Heart left ventricle (tissue), 16 donors: ENCODE measurements at regions of chr4 and their contacts with region 1.

Region 1: GRCh38 chr4:9904976-9905587 is 116.2 kb downstream of the SLC2A9 start:
- DNase-seq: peak in 1 of 5 donors; percentile 58
- ATAC-seq: peak; percentile 10 to 59 (median 36)
- H3K4me3 ChIP-seq: no peak overlapping the region
- H3K27ac ChIP-seq: no peak overlapping the region
- H3K4me1 ChIP-seq: peaks cover 0 to 11% (median 0%) of the 10 kb centered on the region in 12 donors
- H3K27me3 ChIP-seq: no peaks in the 10 kb centered on the region
- CTCF ChIP-seq: no peak
- POLR2A ChIP-seq: no peak

Region 2: DNA sequence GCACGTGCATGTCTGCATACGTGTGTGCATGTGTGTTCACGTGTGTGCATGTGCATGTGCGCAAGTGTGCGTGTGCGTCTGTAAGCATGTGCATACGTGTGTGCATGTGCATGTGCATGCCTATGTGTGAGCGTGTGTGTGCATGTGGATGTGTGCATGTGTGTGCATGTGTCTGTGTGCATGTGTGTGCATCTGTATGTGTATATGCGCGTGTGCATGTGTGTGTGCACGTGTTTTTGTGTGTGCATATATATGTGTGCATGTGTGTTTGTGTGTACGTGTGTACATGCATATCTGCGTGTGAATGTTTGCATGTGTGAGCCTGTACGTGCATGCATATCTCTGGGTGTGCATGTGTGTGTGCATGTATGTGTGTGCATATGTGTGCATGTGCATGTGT is 159.3 kb before region 1 on chr4:
- intact Hi-C with region 1: no loop called
- DNase-seq: no peak
- ATAC-seq: no peak
- H3K4me3 ChIP-seq: no peak overlapping the region
- H3K27ac ChIP-seq: no peak overlapping the region
- H3K4me1 ChIP-seq: no peaks in the 10 kb centered on the region
- H3K27me3 ChIP-seq: no peaks in the 10 kb centered on the region
- CTCF ChIP-seq: no peak
- POLR2A ChIP-seq: no peak

Region 3: DNA sequence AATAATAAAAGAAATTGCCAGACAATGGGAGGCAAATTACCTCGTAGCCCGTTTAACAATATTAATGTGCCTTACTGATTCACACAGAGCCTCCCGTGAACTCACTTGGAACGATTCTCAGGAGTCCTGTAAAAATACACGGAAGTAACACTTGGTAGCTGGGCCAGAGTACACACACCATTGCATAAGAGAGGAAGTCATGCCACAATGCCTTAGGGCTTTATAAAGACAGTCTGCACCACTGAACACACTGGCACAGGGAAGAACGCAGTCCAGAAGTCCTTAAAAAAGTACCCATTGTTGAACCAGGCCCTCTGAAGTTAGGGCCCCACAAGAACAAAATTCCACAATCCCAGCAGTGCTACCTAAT is 101.1 kb after region 1 on chr4:
- intact Hi-C with region 1: loop called in 2 of 10 experiments (anchors 10 kb)
- DNase-seq: peak in 1 of 5 donors; percentile 45
- ATAC-seq: peak; percentile 76 to 93 (median 88)
- H3K4me3 ChIP-seq: no peak overlapping the region
- H3K27ac ChIP-seq: peak overlapping the region in 10 of 12 donors; percentile 8 to 54 (median 31)
- H3K4me1 ChIP-seq: peaks cover 0 to 46% (median 25%) of the 10 kb centered on the region in 12 donors
- H3K27me3 ChIP-seq: no peaks in the 10 kb centered on the region
- CTCF ChIP-seq: no peak
- POLR2A ChIP-seq: no peak

Region 4: DNA sequence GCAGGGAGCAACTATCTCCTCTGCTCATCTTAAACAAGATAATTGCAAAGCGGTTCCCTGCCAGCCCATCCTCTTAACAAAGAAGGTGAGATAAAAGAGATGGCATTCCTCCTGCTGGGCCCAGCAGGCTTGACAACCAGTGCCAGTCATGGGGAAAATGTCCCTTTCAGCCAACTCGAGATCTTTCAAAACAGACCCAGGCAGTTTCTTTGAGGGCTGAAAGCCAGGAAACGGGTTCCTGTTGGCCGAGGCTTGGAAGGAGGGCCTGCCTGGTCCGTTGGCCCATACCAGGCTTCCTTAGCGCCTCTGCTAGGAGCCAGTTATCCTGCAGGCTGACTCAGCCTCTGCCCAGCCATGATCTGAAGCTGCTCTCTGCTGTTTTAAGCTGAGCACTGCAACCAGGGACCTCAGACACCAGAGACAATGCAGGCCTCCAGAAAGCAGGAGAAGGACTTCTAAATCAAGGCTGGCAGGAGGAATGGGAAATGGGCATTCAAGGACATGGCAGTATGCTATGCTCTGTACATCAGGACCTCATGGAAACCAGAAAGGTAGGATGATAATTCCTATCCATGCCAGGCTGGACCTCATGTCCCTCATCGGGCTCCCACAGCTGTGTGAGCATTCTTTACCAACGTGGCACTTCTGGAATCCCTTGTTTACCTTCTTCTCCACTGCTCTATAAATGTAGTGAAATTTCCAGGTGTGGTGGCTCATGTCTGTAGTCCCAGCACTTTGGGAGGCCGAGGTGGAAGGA is 158.6 kb after region 1 on chr4:
- intact Hi-C with region 1: loop called in 1 of 10 experiments (anchors 10 kb)
- DNase-seq: peak; percentile 68 to 78 (median 69)
- ATAC-seq: peak; percentile 93 to 99 (median 98)
- H3K4me3 ChIP-seq: no peak overlapping the region
- H3K27ac ChIP-seq: peak overlapping the region in 6 of 12 donors; percentile 25 to 59 (median 48)
- H3K4me1 ChIP-seq: peaks cover 0 to 17% (median 9%) of the 10 kb centered on the region in 12 donors
- H3K27me3 ChIP-seq: no peaks in the 10 kb centered on the region
- CTCF ChIP-seq: peak; percentile 67 to 86 (median 78)
- POLR2A ChIP-seq: no peak